ENCODE measurements at regions of chr1 and their contacts with region 1.

Region 1: DNA sequence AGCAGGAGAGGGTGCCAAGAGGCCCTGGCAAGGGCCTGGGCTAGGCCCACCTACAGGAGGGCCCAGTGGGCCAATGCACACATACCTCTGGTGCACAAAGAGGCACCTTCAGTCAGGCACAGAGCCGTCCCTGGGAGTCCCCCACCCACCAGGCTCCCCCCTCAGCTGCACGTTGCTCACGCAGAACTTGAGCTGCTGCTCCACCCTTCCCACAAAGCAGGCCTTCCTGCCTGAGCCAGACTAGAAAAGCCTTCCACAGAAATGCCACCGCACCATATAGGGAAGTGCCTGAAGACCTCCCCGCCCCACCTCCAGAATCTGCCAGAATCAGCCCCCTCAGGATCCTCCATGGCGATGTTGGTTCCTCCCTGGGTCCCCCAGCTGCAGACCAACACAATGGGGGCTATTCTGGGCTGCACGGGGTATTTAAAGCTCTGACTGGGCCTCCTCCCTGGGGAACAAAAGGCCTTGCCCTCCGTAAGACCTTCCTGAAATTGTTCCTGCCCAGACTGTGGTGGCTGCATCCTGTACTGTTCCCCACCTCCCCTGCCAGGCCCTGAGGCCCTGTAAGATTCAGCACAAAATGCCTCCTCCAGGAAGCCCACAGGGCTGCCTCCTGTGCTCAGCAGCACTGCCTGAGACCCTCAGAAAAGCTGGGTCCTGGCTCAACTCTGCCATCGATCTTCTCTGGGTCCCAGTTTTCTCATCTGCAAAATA is 27.2 kb downstream of the HSPG2 start:
- DNase-seq: no peak
- ATAC-seq: no peak
- H3K4me3 ChIP-seq: no peak overlapping the region
- H3K27ac ChIP-seq: no peak overlapping the region
- H3K4me1 ChIP-seq: peaks cover 58% of the 10 kb centered on the region
- H3K27me3 ChIP-seq: no peaks in the 10 kb centered on the region
- CTCF ChIP-seq: no peak
- EP300 ChIP-seq: no peak
- POLR2A ChIP-seq: no peak
- RAD21 ChIP-seq: no peak

Region 2: DNA sequence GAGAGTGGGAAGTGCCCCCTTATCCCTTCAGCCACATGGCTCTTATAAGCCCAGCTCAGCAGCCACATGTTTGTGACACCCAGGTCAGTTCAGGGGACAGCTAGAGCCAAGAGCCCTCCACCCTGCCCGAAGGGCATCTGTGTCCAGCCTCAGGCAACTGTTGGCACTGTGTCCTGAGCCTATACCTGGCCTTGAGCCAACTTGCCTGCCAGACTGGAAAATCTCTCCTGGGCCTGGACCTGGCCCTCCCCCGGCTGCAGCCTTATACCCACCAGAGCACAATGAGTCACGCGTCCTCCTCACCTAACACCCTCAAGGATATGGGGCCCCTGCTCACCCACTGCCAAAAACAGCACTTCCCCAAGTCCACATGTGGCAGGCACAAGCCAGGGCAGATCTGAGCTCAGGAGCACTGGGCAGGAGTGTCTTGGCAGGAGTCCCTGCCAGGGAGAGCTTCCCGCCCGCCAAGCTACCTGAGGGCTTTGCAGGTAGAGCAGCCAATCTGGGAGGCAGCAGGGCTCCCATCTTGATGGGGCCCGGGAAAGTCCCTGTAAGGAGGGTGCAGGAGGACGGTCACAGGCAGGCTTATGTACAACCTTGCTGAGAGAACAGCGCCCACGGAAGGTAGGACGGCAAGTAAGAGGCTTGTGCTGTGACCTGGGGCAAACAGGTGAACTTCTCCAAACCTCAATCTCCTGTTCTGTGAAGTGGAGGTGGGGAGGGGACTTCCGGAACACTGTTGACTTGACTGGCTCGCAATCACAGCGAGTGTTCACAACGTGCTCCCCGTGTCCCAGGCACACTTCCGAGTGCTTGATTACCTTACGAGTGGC is 47.0 kb after region 1 on chr1:
- CTCF ChIA-PET with region 1: no interaction called
- POLR2A ChIA-PET with region 1: interaction called, 3 read pairs
- in situ Hi-C with region 1: loop called (anchors 5 kb)
- intact Hi-C with region 1: no loop called
- DNase-seq: no peak
- ATAC-seq: peak; percentile 50
- H3K4me3 ChIP-seq: peak overlapping the region in 2 of 3 experiments; percentile 21 to 55; a peak in 3 of 6 replicates
- H3K27ac ChIP-seq: no peak overlapping the region
- H3K4me1 ChIP-seq: peaks cover 53% of the 10 kb centered on the region
- H3K27me3 ChIP-seq: peaks cover 1 to 16% of the 10 kb centered on the region in 2 experiments; a peak in 3 of 5 replicates
- CTCF ChIP-seq: peak; percentile 31; the same call in 1 of the 2 replicates
- EP300 ChIP-seq: no peak
- POLR2A ChIP-seq: no peak
- RAD21 ChIP-seq: no peak

Measured in HepG2 (cell line).